ENCODE measurements at regions of chr1 and their contacts with region 1.

Region 1: DNA sequence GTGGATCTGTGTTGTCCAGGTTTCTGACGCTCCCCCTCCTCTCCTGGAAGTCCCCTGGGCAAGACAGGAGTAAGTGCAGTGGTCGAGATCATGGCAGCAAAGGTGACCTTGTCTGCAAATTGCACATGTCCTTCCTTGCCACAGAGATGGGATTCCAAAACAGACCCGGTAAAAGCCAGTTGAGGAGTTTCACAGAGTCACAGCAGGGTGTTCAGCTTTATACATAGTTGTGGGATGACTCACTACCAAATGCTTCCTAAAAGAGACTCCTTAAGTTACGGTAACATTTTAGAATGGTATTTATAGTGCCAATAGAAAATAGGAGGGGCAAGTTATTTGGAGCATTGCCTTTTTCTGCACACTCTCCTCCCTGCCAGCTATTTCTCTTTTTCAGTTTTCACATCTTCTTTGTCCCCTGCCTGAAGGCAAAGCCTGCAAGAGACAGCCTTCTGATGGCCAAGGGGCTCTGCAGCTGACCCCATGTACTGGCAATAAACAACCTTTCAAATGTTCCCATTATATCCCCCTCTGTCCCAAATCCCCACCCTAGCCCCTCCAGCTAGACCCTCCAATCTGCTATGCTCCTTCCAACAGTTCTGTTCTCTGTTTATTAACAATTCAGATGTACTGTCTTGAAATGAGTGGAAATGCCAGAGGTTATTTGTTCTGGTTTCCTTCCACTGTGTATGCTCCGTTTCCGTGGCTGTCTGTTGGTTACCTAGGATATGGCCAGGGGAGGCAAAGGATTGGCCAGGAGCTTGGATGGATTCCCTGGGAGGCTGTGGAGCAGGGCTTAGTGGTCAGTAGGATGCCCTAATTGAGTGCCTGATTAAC is 115.0 kb downstream of the TGFB2 start:
- DNase-seq: no peak
- ATAC-seq: peak; percentile 73
- H3K4me3 Mint-ChIP-seq: no peak overlapping the region
- H3K27ac Mint-ChIP-seq: peak overlapping the region; percentile 16
- H3K4me1 Mint-ChIP-seq: peaks cover 20% of the 10 kb centered on the region
- H3K27me3 Mint-ChIP-seq: no peaks in the 10 kb centered on the region
- CTCF ChIP-seq: no peak

Region 2: DNA sequence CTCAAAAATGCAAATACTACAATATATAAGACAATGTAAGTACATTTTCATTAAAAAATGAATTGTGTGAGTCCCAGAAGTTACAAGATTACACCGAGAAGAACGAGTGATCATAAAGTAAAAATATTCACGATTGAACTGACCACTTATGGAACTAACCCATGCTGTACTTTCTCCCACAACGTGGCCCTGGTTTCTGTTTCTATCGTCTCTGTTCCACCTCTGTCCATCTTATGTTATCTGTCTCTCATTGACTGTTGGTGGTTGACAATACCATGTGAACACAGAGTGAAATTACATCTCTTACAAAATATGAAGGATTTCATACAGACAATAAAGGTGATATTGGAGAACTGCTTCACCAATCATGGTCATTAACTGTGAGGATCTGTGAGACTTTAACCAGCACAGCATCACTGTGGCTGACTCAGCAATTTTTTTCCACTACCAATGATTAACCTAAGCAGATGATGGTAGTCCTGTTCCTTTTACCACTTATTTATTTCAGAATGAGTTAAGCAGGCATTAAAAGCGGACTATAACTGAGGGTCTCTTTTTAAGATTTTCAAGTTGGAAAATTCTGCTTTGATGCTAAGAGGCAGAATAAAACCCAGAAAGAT is 50.2 kb after region 1 on chr1:
- CTCF ChIA-PET with region 1: no interaction called
- POLR2A ChIA-PET with region 1: no interaction called
- intact Hi-C with region 1: loop called (anchors 5 kb)
- DNase-seq: no peak
- ATAC-seq: no peak
- H3K4me3 Mint-ChIP-seq: no peak overlapping the region
- H3K27ac Mint-ChIP-seq: no peak overlapping the region
- H3K4me1 Mint-ChIP-seq: peaks cover 17% of the 10 kb centered on the region
- H3K27me3 Mint-ChIP-seq: no peaks in the 10 kb centered on the region
- CTCF ChIP-seq: no peak

Region 3: GRCh38 chr1:218967836-218968235 is 507.7 kb after region 1 on chr1:
- CTCF ChIA-PET with region 1: no interaction called
- POLR2A ChIA-PET with region 1: no interaction called
- intact Hi-C with region 1: no loop called
- DNase-seq: no peak
- ATAC-seq: no peak
- H3K4me3 Mint-ChIP-seq: no peak overlapping the region
- H3K27ac Mint-ChIP-seq: no peak overlapping the region
- H3K4me1 Mint-ChIP-seq: no peaks in the 10 kb centered on the region
- H3K27me3 Mint-ChIP-seq: no peaks in the 10 kb centered on the region
- CTCF ChIP-seq: no peak

Measured in activated B cell treated with CpG ODN at 0.5 μM for 24 hours (primary cell).